ENCODE measurements at regions of chr6 and their contacts with region 1.

Region 1: GRCh38 chr6:30942338-30943060 is 1.7 kb downstream of the MUCL3 start:
- DNase-seq: peak; percentile 85 to 87
- ATAC-seq: peak; percentile 95 to 97
- H3K4me3 ChIP-seq: peak overlapping the region; percentile 12; the same call in 1 of the 3 replicates
- H3K27ac ChIP-seq: peak overlapping the region; percentile 80 to 84
- H3K4me1 ChIP-seq: peaks cover 14% of the 10 kb centered on the region
- CTCF ChIP-seq: peak; percentile 41
- EP300 ChIP-seq: no peak
- POLR2A ChIP-seq: no peak
- RAD21 ChIP-seq: peak; percentile 56; a peak in 4 of 5 replicates

Region 2: GRCh38 chr6:30857549-30857948 is 85.0 kb before region 1 on chr6:
- CTCF ChIA-PET with region 1: no interaction called
- POLR2A ChIA-PET with region 1: no interaction called
- DNase-seq: no peak
- ATAC-seq: no peak
- H3K4me3 ChIP-seq: no peak overlapping the region
- H3K27ac ChIP-seq: no peak overlapping the region
- H3K4me1 ChIP-seq: no peaks in the 10 kb centered on the region
- CTCF ChIP-seq: no peak
- EP300 ChIP-seq: no peak
- POLR2A ChIP-seq: no peak
- RAD21 ChIP-seq: no peak

Region 3: GRCh38 chr6:31058128-31058894 is 115.8 kb after region 1 on chr6:
- CTCF ChIA-PET with region 1: interaction called, 10 read pairs
- POLR2A ChIA-PET with region 1: no interaction called
- DNase-seq: peak; percentile 68 to 74
- ATAC-seq: peak; percentile 93
- H3K4me3 ChIP-seq: no peak overlapping the region
- H3K27ac ChIP-seq: peak overlapping the region in 1 of 2 experiments; percentile 49; a peak in 2 of 6 replicates
- H3K4me1 ChIP-seq: peaks cover 15% of the 10 kb centered on the region
- CTCF ChIP-seq: peak; percentile 37
- EP300 ChIP-seq: no peak
- POLR2A ChIP-seq: no peak
- RAD21 ChIP-seq: no peak

Measured in A549 (cell line).